Colonic mucosa (tissue), 4 donors: ENCODE measurements at regions of chr4 and their contacts with region 1.

Region 1: DNA sequence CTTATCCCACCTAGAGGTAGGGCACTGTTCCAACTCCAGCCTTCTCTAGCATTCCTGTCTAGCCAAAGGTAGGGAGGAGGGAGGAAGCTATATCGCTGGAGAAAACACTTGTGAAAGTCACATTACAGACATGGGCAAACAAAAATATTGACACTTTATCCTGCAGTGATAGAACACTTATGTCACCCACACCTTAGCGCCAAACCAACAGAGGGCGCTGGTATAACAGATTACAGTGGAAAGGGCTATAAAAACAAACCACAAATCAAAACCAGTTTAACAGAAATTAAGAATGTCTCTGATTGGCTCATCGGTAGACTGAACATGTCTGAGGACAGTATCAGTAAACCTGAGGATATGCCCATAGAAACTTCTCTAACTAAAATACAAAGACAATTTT is 451.3 kb downstream of the TLL1 start:
- DNase-seq: peak; percentile 49
- H3K4me3 ChIP-seq: no peak overlapping the region
- H3K27ac ChIP-seq: no peak overlapping the region
- H3K4me1 ChIP-seq: no peaks in the 10 kb centered on the region
- H3K27me3 ChIP-seq: no peaks in the 10 kb centered on the region
- CTCF ChIP-seq: peak; percentile 23

Region 2: GRCh38 chr4:166594326-166594946 is 270.1 kb after region 1 on chr4:
- intact Hi-C with region 1: loop called (anchors 5 kb)
- DNase-seq: peak; percentile 31
- H3K4me3 ChIP-seq: no peak overlapping the region
- H3K27ac ChIP-seq: no peak overlapping the region
- H3K4me1 ChIP-seq: no peaks in the 10 kb centered on the region
- H3K27me3 ChIP-seq: no peaks in the 10 kb centered on the region
- CTCF ChIP-seq: peak; percentile 32